Colonic mucosa (tissue), 4 donors: ENCODE measurements at regions of chr6 and their contacts with region 1.

Region 1: DNA sequence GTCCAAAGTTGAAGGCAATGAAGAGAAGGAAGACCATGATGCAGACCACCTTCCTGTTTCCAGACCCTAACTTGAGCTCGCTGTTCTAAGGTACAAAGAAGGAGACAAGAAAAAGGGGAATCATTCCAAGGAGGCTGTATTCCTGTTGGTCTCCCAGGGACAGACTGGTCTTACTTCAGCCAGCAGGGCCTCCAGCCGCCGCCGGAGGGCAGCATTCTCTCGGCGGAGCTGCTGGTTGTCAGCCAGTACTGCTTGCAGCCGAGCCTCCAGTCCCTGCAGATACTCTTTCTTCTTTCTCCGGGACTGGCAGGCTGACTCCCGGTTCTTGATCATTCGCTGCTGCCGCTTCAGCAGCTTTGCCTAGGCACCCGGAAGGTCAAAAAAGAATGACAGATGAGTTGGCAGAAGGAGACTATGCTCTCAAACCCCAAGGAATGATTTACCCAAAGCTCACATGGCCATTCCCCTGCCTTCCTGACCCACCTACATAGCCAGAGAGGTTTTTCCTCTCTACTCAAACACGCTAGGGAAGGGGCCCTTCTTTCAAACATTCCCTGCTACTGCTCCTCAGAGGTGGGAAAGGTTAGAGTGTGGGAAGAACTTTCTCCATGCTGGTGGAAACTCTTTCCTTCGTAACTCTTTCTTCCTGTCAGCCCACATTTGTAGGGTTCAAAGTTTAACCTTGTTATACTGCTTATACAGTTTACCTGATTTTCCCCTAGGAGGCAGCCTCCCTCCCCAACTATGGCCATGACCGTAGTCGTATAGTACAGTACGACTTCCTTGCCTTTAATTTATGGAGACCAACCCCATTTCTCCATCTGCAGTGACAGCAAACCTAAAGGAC is 9.0 kb downstream of the ATF6B start:
- DNase-seq: peak; percentile 88
- H3K4me3 ChIP-seq: no peak overlapping the region
- H3K27ac ChIP-seq: peak overlapping the region; percentile 70
- H3K4me1 ChIP-seq: peaks cover 4% of the 10 kb centered on the region
- H3K27me3 ChIP-seq: no peaks in the 10 kb centered on the region
- CTCF ChIP-seq: peak; percentile 86

Region 2: DNA sequence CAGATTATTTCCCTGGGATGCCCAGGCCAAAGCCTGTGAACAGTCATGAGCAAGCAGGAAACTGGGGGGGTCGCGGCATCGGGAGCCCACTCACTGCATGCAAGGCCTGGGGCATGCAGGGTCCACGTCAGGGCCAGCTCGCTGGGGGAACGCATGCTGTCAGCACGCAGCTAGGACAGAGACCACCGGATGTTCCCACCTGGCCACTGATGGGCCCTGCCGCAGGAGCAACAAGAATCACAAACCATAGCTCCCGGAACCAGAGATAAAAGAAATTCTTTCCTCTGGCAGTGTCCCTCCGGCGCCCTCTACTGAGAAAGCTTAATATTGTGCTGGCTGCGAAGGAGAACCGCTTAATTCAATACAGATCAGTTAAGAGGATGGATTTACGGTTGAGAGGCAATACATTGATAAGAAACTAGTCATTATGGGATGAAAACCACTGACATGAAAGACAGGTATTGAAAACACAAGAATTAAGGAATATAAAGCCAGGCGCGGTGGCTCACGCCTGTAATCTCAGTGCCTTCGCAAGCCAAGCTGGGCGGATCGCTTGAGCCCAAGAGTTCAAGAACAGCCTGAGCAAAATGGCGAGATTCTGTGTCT is 1039.2 kb before region 1 on chr6:
- intact Hi-C with region 1: no loop called
- DNase-seq: peak; percentile 80
- H3K4me3 ChIP-seq: peak overlapping the region; percentile 1
- H3K27ac ChIP-seq: no peak overlapping the region
- H3K4me1 ChIP-seq: no peaks in the 10 kb centered on the region
- H3K27me3 ChIP-seq: no peaks in the 10 kb centered on the region
- CTCF ChIP-seq: peak; percentile 73

Region 3: GRCh38 chr6:32154514-32155161 is 35.6 kb after region 1 on chr6:
- intact Hi-C with region 1: loop called (anchors 5 kb)
- DNase-seq: peak; percentile 84
- H3K4me3 ChIP-seq: peak overlapping the region; percentile 60
- H3K27ac ChIP-seq: peak overlapping the region; percentile 68
- H3K4me1 ChIP-seq: peaks cover 4% of the 10 kb centered on the region
- H3K27me3 ChIP-seq: no peaks in the 10 kb centered on the region
- CTCF ChIP-seq: peak; percentile 44

Region 4: GRCh38 chr6:32177788-32178546 is 59.0 kb after region 1 on chr6 and contains the start of gene RNF5:
- intact Hi-C with region 1: no loop called
- DNase-seq: peak; percentile 99
- H3K4me3 ChIP-seq: peak within 1 kb of the TSS; percentile 77
- H3K27ac ChIP-seq: peak within 1 kb of the TSS; percentile 94
- H3K4me1 ChIP-seq: peaks cover 19% of the 10 kb centered on the region
- H3K27me3 ChIP-seq: no peaks in the 10 kb centered on the region
- CTCF ChIP-seq: no peak
- total RNA-seq, gene RNF5: 75.8 to 87.4 TPM